ENCODE measurements at regions of chr10 and their contacts with region 1.

Region 1: DNA sequence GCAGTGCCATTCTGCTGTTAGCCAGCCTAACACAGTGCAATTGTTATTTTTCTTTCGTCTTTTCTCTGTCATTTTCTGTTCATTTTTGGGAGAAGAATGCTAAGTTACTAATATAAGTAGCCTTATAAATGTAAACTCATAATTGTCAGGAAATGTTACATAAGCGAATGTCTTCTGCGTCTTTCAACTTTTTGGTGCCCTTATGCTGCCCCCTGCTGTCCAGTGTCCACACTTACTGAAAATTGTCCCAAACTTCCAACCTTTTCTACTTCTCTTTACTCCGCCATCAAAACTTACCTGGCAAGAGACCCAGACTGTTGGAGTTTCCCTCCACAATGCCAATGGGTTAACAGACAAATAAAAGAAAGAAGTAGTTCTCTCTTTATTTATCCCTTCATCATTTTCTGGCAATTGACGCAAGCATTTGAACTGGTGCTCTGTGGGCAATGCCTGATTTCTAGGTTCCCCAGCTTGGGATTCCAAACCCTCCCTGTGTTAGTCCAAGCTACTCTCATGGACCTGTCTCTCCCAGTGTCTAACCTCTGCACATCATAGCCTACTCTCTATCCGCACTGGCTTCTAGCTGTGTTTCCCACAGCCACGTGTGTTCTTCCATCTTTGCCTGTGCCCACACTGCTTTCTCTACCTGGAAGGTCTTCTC is 21.0 kb upstream of the EPC1 start:
- DNase-seq: peak; percentile 81
- ATAC-seq: peak; percentile 77
- H3K4me3 ChIP-seq: no peak overlapping the region
- H3K4me3 Mint-ChIP-seq: no peak overlapping the region
- H3K27ac ChIP-seq: peak overlapping the region in 1 of 2 donors; percentile 27
- H3K27ac Mint-ChIP-seq: no peak overlapping the region
- H3K4me1 ChIP-seq: peaks cover 6% of the 10 kb centered on the region in 2 donors
- H3K4me1 Mint-ChIP-seq: peaks cover 27% of the 10 kb centered on the region
- H3K27me3 ChIP-seq: no peaks in the 10 kb centered on the region
- H3K27me3 Mint-ChIP-seq: no peaks in the 10 kb centered on the region
- CTCF ChIP-seq: peak; percentile 89

Region 2: GRCh38 chr10:32190890-32191491 is 176.9 kb before region 1 on chr10:
- CTCF ChIA-PET with region 1: interaction called, 26 read pairs
- POLR2A ChIA-PET with region 1: no interaction called
- intact Hi-C with region 1: loop called (anchors 1 kb)
- DNase-seq: peak; percentile 70
- ATAC-seq: peak; percentile 82
- H3K4me3 ChIP-seq: no peak overlapping the region
- H3K4me3 Mint-ChIP-seq: no peak overlapping the region
- H3K27ac ChIP-seq: no peak overlapping the region
- H3K27ac Mint-ChIP-seq: peak overlapping the region; percentile 79
- H3K4me1 ChIP-seq: peaks cover 0 to 4% of the 10 kb centered on the region in 2 donors
- H3K4me1 Mint-ChIP-seq: peaks cover 5% of the 10 kb centered on the region
- H3K27me3 ChIP-seq: peaks cover 0 to 4% (median 0%) of the 10 kb centered on the region in 4 experiments
- H3K27me3 Mint-ChIP-seq: peaks cover 7% of the 10 kb centered on the region
- CTCF ChIP-seq: peak; percentile 86

Region 3: GRCh38 chr10:32256613-32257437 is 111.1 kb before region 1 on chr10:
- CTCF ChIA-PET with region 1: interaction called, 75 read pairs
- POLR2A ChIA-PET with region 1: no interaction called
- intact Hi-C with region 1: loop called (anchors 1 kb)
- DNase-seq: peak; percentile 81
- ATAC-seq: peak; percentile 92
- H3K4me3 ChIP-seq: no peak overlapping the region
- H3K4me3 Mint-ChIP-seq: peak overlapping the region; percentile 16
- H3K27ac ChIP-seq: no peak overlapping the region
- H3K27ac Mint-ChIP-seq: no peak overlapping the region
- H3K4me1 ChIP-seq: peaks cover 3 to 7% of the 10 kb centered on the region in 2 donors
- H3K4me1 Mint-ChIP-seq: peaks cover 6% of the 10 kb centered on the region
- H3K27me3 ChIP-seq: no peaks in the 10 kb centered on the region
- H3K27me3 Mint-ChIP-seq: no peaks in the 10 kb centered on the region
- CTCF ChIP-seq: peak; percentile 93

Region 4: DNA sequence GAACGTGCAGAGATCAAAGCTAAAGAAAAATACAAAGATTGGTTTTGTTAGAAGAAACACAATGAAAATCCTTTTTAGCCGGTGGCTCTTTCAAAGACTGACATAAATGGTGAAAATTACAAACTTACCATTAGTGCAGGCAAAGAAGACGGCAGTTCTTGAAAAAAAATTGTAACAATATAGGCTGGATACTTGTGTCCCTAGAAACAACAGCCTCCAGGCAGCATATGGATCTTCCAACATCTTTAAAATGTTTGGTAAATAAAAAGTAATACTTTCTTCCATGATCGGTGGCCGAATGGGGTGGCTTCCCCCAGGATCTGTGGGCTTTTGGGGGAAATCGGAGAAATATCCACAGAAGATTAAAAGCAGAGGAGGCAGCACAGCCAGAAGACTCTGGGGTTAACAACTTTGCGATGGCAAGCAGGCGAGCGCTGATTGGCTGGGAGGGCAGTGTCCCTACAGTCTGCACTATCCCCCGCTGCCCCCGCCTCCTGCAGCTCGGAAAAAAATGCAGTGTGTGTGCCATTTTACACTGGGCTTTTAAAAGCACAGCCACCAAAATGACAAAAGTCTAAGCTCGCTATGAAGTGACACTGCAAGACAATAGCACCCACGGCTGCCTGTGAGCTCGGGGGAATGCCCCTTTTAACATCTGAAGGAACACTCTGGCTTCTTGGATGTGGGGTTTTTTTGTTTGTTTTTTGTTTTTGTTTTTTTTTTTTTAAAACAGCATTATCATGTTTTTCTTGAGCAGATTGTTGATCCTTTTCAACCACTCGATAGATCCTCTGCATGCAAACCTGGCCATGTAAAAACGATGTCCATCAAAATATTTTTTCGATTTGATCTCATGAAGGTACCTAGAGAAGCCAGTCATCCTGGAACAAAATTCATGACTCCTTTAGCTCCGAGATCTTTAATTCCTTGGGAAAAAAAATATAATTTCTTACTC is 10.7 kb after region 1 on chr10:
- CTCF ChIA-PET with region 1: interaction called, 29 read pairs
- POLR2A ChIA-PET with region 1: no interaction called
- intact Hi-C with region 1: no loop called
- DNase-seq: peak; percentile 90
- ATAC-seq: peak; percentile 95
- H3K4me3 ChIP-seq: peak overlapping the region; percentile 63 to 99 (median 83)
- H3K4me3 Mint-ChIP-seq: no peak overlapping the region
- H3K27ac ChIP-seq: peak overlapping the region; percentile 73 to 85
- H3K27ac Mint-ChIP-seq: no peak overlapping the region
- H3K4me1 ChIP-seq: peaks cover 10 to 23% of the 10 kb centered on the region in 2 donors
- H3K4me1 Mint-ChIP-seq: peaks cover 20% of the 10 kb centered on the region
- H3K27me3 ChIP-seq: no peaks in the 10 kb centered on the region
- H3K27me3 Mint-ChIP-seq: no peaks in the 10 kb centered on the region
- CTCF ChIP-seq: no peak

Measured in B cell (primary cell).